ENCODE measurements at regions of chr12 and their contacts with region 1.

Region 1: DNA sequence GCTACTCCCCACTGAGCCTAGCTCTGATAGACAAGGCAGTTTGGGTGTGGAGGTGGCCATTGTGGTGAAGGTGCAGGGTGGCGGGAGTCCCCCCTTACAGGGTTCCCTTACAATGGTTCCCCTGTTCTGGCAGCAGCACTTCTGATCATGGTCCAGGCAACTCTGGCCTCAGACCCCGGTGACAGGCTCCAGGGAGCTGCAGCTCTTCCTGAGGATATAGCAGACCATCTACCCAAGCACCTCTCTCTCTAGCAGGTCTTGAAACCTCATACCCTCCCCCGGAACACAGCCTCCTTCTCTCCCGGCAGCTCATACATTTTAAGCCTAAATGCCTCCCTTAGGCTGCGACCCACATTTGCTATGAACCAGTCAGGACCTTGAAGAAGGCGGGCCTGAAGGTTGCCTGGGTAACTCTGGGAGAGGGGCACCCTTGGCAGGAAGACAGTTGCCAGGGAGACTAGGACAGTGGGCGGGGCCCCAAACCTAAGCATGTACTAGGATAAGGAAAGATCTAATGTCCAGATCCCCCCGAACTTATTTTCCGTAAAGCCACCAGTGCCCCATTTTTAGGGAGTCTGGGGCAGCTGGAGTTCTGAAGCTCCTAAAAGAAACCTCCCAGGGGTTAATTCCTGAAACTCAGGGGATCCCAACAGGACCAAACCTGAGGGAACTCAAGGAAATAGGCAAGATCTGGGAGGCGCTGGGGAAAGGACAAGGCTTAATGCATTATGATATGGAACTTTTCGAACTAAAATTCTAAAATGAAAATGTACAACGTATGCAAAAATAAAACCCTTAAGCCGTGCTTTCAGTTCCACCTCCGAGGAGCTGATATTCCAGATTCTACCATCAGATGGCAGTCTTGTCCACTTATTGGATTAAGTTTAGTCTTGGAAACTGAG is 4.5 kb upstream of the GDF11 start:
- DNase-seq: peak; percentile 82 to 84
- H3K4me3 ChIP-seq: peak overlapping the region; percentile 48
- H3K4me3 Mint-ChIP-seq: peak overlapping the region; percentile 77
- H3K27ac Mint-ChIP-seq: peak overlapping the region; percentile 43
- H3K4me1 ChIP-seq: peaks cover 14% of the 10 kb centered on the region
- H3K4me1 Mint-ChIP-seq: peaks cover 28% of the 10 kb centered on the region
- H3K27me3 ChIP-seq: no peaks in the 10 kb centered on the region
- H3K27me3 Mint-ChIP-seq: no peaks in the 10 kb centered on the region
- CTCF ChIP-seq: peak; percentile 70 to 75

Region 2: GRCh38 chr12:55619354-55620138 is 118.8 kb before region 1 on chr12:
- CTCF ChIA-PET with region 1: no interaction called
- POLR2A ChIA-PET with region 1: no interaction called
- intact Hi-C with region 1: no loop called
- DNase-seq: peak; percentile 68 to 88
- H3K4me3 ChIP-seq: no peak overlapping the region
- H3K4me3 Mint-ChIP-seq: no peak overlapping the region
- H3K27ac Mint-ChIP-seq: peak overlapping the region; percentile 31
- H3K4me1 ChIP-seq: no peaks in the 10 kb centered on the region
- H3K4me1 Mint-ChIP-seq: peaks cover 10% of the 10 kb centered on the region
- H3K27me3 ChIP-seq: no peaks in the 10 kb centered on the region
- H3K27me3 Mint-ChIP-seq: no peaks in the 10 kb centered on the region
- CTCF ChIP-seq: peak; percentile 54 to 75

Region 3: DNA sequence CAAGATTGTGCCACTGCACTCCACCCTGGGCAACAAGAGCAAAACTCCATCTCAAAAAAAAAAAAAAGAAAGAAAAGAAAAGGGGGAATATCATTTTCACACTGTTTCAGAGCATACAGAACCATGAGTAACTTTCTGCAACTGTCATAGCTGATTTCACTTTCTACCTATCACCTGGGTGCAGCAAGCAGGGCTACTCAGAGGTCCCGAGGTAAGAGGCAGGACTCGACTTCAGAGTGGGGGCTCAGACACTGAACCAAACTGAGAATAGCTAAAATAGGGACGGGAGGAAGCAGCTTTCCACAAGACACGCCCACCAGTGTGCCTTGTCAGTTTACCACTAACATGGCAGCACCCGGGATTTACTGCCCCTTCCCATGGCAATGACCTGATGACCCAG is 71.8 kb before region 1 on chr12:
- CTCF ChIA-PET with region 1: no interaction called
- POLR2A ChIA-PET with region 1: no interaction called
- intact Hi-C with region 1: no loop called
- DNase-seq: no peak
- H3K4me3 ChIP-seq: no peak overlapping the region
- H3K4me3 Mint-ChIP-seq: no peak overlapping the region
- H3K27ac Mint-ChIP-seq: no peak overlapping the region
- H3K4me1 ChIP-seq: peaks cover 9% of the 10 kb centered on the region
- H3K4me1 Mint-ChIP-seq: peaks cover 8% of the 10 kb centered on the region
- H3K27me3 ChIP-seq: no peaks in the 10 kb centered on the region
- H3K27me3 Mint-ChIP-seq: no peaks in the 10 kb centered on the region
- CTCF ChIP-seq: no peak

Region 4: DNA sequence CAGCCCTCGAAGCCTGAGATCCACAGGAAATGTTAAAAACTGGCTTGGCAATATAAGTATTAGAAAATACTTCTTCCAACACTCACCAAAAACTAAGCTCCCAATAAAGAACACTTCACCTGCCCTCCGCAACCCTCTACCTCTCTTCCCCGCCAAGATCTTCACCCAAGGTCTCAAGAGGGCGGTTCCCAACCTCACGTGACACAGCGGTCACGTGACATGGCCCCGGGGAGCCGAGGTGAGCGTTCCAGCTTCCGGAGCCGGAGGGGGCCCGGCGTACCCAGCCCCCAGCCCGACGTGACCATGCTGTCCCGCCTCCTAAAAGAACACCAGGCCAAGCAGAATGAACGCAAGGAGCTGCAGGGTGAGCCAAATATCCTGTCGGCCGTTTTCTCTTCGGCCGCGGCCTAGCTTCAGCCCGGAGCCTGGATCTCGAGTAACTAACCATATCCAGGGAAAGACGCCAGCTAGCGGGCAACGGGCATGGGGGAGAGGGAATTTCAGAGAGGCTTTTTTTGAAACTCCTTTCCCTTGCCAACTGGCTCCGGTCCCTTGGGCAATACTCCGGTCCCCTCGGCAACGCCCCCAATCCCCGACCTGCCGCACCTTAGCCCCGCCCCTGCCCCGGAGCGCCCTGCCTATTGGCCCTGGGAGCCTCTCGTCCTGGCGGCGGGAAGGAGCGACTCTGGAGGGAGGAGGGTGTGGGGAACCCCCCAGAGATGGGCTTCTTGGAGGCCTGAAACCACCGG is 22.4 kb before region 1 on chr12 and contains the start of gene BLOC1S1:
- CTCF ChIA-PET with region 1: interaction called, 26 read pairs
- POLR2A ChIA-PET with region 1: no interaction called
- intact Hi-C with region 1: no loop called
- DNase-seq: peak; percentile 93 to 95
- H3K4me3 ChIP-seq: peak within 1 kb of the TSS; percentile 55
- H3K4me3 Mint-ChIP-seq: peak within 1 kb of the TSS; percentile 69
- H3K27ac Mint-ChIP-seq: peak within 1 kb of the TSS; percentile 80
- H3K4me1 ChIP-seq: peaks cover 36% of the 10 kb centered on the region
- H3K4me1 Mint-ChIP-seq: no peaks in the 10 kb centered on the region
- H3K27me3 ChIP-seq: no peaks in the 10 kb centered on the region
- H3K27me3 Mint-ChIP-seq: peaks cover 7% of the 10 kb centered on the region
- CTCF ChIP-seq: no peak
- total RNA-seq, gene BLOC1S1: 59.4 and 73.7 TPM in 2 replicates

Region 5: GRCh38 chr12:55817346-55818139 is 79.2 kb after region 1 on chr12 and contains the starts of genes ORMDL2 and SARNP:
- CTCF ChIA-PET with region 1: interaction called, 28 read pairs
- POLR2A ChIA-PET with region 1: interaction called, 9 read pairs
- intact Hi-C with region 1: loop called (anchors 1 kb)
- DNase-seq: peak; percentile 97 to 99
- H3K4me3 ChIP-seq: peak within 1 kb of the TSS; percentile 83
- H3K4me3 Mint-ChIP-seq: no peak within 1 kb of the TSS
- H3K27ac Mint-ChIP-seq: no peak within 1 kb of the TSS
- H3K4me1 ChIP-seq: peaks cover 7% of the 10 kb centered on the region; the same call in 1 of the 2 replicates
- H3K4me1 Mint-ChIP-seq: peaks cover 30% of the 10 kb centered on the region
- H3K27me3 ChIP-seq: no peaks in the 10 kb centered on the region
- H3K27me3 Mint-ChIP-seq: no peaks in the 10 kb centered on the region
- CTCF ChIP-seq: no peak
- total RNA-seq, gene ORMDL2: 44.0 and 48.3 TPM in 2 replicates
- total RNA-seq, gene SARNP: 70.9 and 77.6 TPM in 2 replicates

Region 6: DNA sequence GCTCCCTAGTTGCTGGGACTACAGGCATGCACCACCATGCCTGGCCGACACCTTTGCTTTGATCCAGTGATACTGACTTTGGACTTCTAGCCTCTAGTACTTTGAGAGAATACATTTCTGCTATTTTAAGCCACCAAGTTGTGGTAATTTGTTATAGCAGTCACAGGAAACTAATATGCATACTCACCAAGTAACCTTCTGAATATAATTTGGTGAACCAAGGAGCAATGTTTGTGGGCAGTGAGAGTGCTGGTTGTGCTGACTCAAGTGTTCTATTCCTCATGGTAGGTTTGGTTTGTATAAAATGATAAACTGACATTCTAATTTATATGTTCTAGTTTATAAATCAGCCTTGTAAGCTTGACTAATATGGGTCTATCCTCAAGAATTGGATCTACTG is 146.7 kb after region 1 on chr12:
- CTCF ChIA-PET with region 1: no interaction called
- POLR2A ChIA-PET with region 1: no interaction called
- intact Hi-C with region 1: no loop called
- DNase-seq: no peak
- H3K4me3 ChIP-seq: no peak overlapping the region
- H3K4me3 Mint-ChIP-seq: no peak overlapping the region
- H3K27ac Mint-ChIP-seq: no peak overlapping the region
- H3K4me1 ChIP-seq: no peaks in the 10 kb centered on the region
- H3K4me1 Mint-ChIP-seq: peaks cover 7% of the 10 kb centered on the region
- H3K27me3 ChIP-seq: no peaks in the 10 kb centered on the region
- H3K27me3 Mint-ChIP-seq: no peaks in the 10 kb centered on the region
- CTCF ChIP-seq: no peak

Region 7: GRCh38 chr12:55940065-55940732 is 201.8 kb after region 1 on chr12:
- CTCF ChIA-PET with region 1: interaction called, 7 read pairs
- POLR2A ChIA-PET with region 1: interaction called, 3 read pairs
- intact Hi-C with region 1: loop called (anchors 1 kb)
- DNase-seq: peak; percentile 84 to 87
- H3K4me3 ChIP-seq: no peak overlapping the region
- H3K4me3 Mint-ChIP-seq: no peak overlapping the region
- H3K27ac Mint-ChIP-seq: no peak overlapping the region
- H3K4me1 ChIP-seq: peaks cover 26% of the 10 kb centered on the region
- H3K4me1 Mint-ChIP-seq: peaks cover 16% of the 10 kb centered on the region
- H3K27me3 ChIP-seq: no peaks in the 10 kb centered on the region
- H3K27me3 Mint-ChIP-seq: no peaks in the 10 kb centered on the region
- CTCF ChIP-seq: peak; percentile 79 to 92

Region 8: GRCh38 chr12:56041552-56042429 is 303.4 kb after region 1 on chr12 and contains the start of gene RPS26:
- CTCF ChIA-PET with region 1: no interaction called
- POLR2A ChIA-PET with region 1: no interaction called
- intact Hi-C with region 1: loop called (anchors 1 kb)
- DNase-seq: peak; percentile 95 to 98
- H3K4me3 ChIP-seq: peak within 1 kb of the TSS; percentile 79
- H3K4me3 Mint-ChIP-seq: peak within 1 kb of the TSS; percentile 94
- H3K27ac Mint-ChIP-seq: peak within 1 kb of the TSS; percentile 97
- H3K4me1 ChIP-seq: peaks cover 10% of the 10 kb centered on the region
- H3K4me1 Mint-ChIP-seq: peaks cover 17% of the 10 kb centered on the region
- H3K27me3 ChIP-seq: no peaks in the 10 kb centered on the region
- H3K27me3 Mint-ChIP-seq: no peaks in the 10 kb centered on the region
- CTCF ChIP-seq: peak in 1 of 2 experiments; percentile 79
- total RNA-seq, gene RPS26: 50.2 and 60.4 TPM in 2 replicates

Measured in Caco-2 (cell line).